ENCODE measurements at regions of chr6 and their contacts with region 1.

Region 1: DNA sequence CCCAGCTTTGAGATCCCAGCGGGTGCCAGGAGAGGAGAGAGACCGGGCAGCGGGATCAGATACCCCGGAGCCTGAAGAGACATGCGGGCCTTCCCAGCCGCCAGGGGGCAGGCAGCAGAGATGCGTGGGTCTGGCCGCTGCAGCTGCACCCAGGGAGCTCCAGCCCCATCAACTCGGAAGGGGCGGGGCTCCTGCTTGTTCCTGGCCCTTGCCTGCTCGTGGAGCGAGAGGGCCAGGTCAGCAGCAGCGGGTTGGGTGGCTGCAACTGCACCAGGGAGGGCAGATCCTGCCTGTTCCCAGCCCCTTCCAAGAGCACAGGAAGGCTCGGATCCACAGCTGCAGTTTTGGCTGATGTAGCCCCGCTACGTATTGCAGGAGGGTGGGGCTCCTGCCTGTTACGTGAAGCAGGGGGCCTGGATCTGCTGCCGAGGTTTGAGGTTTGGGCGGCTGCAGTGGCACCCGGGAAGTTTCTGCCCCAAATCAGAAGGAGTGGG is 532.8 kb downstream of the RFPL4B start:
- DNase-seq: peak in 6 of 10 donors; percentile 28 to 56 (median 41)
- H3K4me3 ChIP-seq: peak overlapping the region in 26 of 59 donors; percentile 12 to 52 (median 26)
- H3K27ac ChIP-seq: no peak overlapping the region
- H3K27me3 ChIP-seq: no peaks in the 10 kb centered on the region
- CTCF ChIP-seq: peak in 18 of 56 donors; percentile 9 to 45 (median 29)

Region 2: GRCh38 chr6:112691289-112691688 is 188.7 kb before region 1 on chr6:
- intact Hi-C with region 1: no loop called
- DNase-seq: no peak
- H3K4me3 ChIP-seq: no peak overlapping the region
- H3K27ac ChIP-seq: peak overlapping the region in 2 of 59 donors; percentile 4 to 16
- H3K27me3 ChIP-seq: peaks cover 0 to 4% (median 0%) of the 10 kb centered on the region in 45 donors
- CTCF ChIP-seq: no peak

Region 3: GRCh38 chr6:112839525-112839961 is 40.4 kb before region 1 on chr6:
- intact Hi-C with region 1: no loop called
- DNase-seq: no peak
- H3K4me3 ChIP-seq: no peak overlapping the region
- H3K27ac ChIP-seq: peak overlapping the region in 1 of 59 donors; percentile 6
- H3K27me3 ChIP-seq: no peaks in the 10 kb centered on the region
- CTCF ChIP-seq: no peak

Region 4: DNA sequence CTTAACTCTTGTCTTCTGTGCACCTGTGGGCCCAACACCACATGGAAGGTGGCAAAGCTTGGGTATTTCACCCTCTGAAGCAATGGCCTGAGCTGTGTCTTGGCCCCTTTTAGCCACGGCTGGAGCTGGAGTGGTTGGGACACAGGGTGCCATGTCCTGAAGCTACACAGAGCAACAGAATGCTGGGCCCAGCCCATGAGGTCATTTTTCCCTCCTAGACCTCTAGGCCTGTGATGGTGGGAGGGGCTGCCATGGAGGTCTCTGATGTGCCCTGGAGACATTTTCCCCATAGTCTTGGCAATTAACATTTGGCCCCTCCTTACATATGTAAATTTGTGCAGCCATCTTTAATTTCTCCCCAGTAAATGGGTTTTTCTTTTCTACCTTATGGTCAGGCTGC is 88.0 kb after region 1 on chr6:
- intact Hi-C with region 1: no loop called
- DNase-seq: no peak
- H3K4me3 ChIP-seq: no peak overlapping the region
- H3K27ac ChIP-seq: no peak overlapping the region
- H3K27me3 ChIP-seq: no peaks in the 10 kb centered on the region
- CTCF ChIP-seq: no peak

Region 5: DNA sequence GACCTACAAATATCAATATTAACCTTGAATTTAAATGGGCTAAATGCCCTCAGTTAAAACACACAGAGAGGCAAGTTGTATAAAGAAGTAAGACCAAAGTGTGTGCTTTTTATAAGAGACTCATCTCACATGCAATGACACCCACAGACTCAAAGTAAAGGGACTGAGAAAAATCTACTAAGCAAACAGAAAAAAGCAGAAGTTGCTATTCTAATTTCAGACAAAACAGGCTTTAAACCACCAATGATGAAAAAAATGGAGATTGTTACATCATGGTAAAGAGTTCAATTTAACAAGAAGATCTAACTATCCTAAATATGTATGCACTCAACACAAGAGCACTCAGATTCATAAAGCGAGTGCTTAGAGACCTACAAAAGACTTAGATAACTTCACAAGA is 235.2 kb after region 1 on chr6:
- intact Hi-C with region 1: loop called in 1 of 2 experiments (anchors 10 kb)
- DNase-seq: no peak
- H3K4me3 ChIP-seq: no peak overlapping the region
- H3K27ac ChIP-seq: no peak overlapping the region
- H3K27me3 ChIP-seq: no peaks in the 10 kb centered on the region
- CTCF ChIP-seq: no peak

Region 6: DNA sequence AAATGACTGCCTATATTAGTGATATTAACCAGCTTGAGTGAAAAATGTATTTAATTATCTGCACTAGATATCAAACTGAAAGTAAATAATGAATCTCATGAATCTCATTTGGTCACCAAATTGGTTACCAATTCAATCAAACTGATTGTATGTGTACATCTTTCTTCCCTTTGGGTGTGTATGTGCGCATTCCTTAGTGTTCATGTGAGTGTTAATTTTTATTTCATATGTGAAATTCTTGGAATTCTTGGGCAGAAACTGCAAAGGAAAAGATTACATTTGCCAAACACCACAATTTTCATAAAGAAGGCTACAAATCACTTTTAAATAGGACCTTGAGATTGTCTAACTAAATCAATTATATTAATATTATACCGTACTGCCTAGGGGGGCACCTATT is 328.8 kb after region 1 on chr6:
- intact Hi-C with region 1: loop called in 1 of 2 experiments (anchors 10 kb)
- DNase-seq: no peak
- H3K4me3 ChIP-seq: no peak overlapping the region
- H3K27ac ChIP-seq: no peak overlapping the region
- H3K27me3 ChIP-seq: peaks cover 0 to 4% (median 0%) of the 10 kb centered on the region in 45 donors
- CTCF ChIP-seq: no peak

Measured in dorsolateral prefrontal cortex (tissue), 120 donors.